ENCODE measurements at regions of chr11 and their contacts with region 1.

Region 1: DNA sequence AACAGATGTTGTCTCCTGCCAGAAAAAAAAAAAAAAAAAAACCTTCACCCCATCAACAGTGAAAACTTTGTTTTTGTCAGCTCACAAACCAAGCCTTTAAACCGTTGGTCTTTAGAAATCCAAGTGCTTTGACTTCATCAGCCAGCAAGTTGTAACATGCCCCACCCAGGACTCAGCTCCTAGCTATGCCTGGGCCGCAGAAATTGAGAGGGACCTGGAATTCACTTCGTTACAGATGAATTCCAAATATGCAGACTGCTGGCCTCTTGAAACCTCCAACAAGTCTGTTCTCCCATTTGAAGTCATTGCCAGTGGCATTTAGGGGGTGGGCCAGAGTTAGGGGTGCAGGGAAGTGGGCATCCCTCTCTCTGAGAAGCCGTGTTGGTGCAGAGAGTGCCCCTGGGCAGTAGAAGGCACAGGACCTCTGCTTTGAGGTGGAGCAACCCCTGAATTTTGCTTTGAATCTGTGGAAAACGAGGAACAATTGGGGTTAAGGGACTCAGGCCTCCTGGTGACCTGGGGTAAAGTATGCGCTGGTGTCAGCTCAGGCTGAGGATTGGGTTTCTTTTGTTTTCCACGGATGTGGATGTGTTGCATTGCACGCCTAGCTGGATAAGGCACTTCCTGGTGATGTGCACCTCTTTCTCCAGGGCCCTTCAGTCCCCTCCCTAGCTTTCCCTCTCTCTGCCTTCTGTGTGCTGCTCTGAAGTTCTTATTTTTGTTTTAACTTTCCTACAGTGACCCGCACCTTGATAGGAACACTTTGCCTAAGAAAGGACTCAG is 109.5 kb downstream of the DBX1 start:
- DNase-seq: no peak
- ATAC-seq: no peak

Region 2: GRCh38 chr11:19735157-19735908 is 315.4 kb before region 1 on chr11:
- intact Hi-C with region 1: no loop called
- DNase-seq: no peak
- ATAC-seq: no peak

Region 3: GRCh38 chr11:19994672-19995071 is 56.1 kb before region 1 on chr11:
- intact Hi-C with region 1: loop called (anchors 5 kb)
- DNase-seq: no peak
- ATAC-seq: no peak

Region 4: GRCh38 chr11:20110908-20111669 is 60.3 kb after region 1 on chr11:
- intact Hi-C with region 1: loop called (anchors 2 kb)
- DNase-seq: no peak
- ATAC-seq: peak; percentile 42

Measured in Right ventricle myocardium inferior (tissue), 1 donor.